HCT116 (cell line): ENCODE measurements at regions of chr21 and their contacts with region 1.

Region 1: GRCh38 chr21:31180256-31181081 is 142.2 kb upstream of the KRTAP19-8 start:
- DNase-seq: peak; percentile 24
- ATAC-seq: peak; percentile 63; the same call in 1 of the 2 replicates
- H3K4me3 ChIP-seq: no peak overlapping the region
- H3K27ac ChIP-seq: no peak overlapping the region
- H3K4me1 ChIP-seq: no peaks in the 10 kb centered on the region
- H3K27me3 ChIP-seq: no peaks in the 10 kb centered on the region
- CTCF ChIP-seq: peak; percentile 31 to 68 (median 56); a peak in 5 of 6 replicates
- POLR2A ChIP-seq: no peak
- RAD21 ChIP-seq: peak; percentile 45

Region 2: GRCh38 chr21:31098576-31099005 is 81.9 kb before region 1 on chr21:
- CTCF ChIA-PET with region 1: interaction called, 5 read pairs
- POLR2A ChIA-PET with region 1: no interaction called
- RAD21 ChIA-PET with region 1: no interaction called
- intact Hi-C with region 1: loop called (anchors 1 kb)
- DNase-seq: peak; percentile 51
- ATAC-seq: peak; percentile 97
- H3K4me3 ChIP-seq: no peak overlapping the region
- H3K27ac ChIP-seq: no peak overlapping the region
- H3K4me1 ChIP-seq: no peaks in the 10 kb centered on the region; a peak in 1 of 4 replicates
- H3K27me3 ChIP-seq: 0 out of 2 replicates have a peak, but pooled peaks cover 3% of the 10 kb centered on the region
- CTCF ChIP-seq: peak; percentile 65 to 94 (median 92)
- POLR2A ChIP-seq: no peak
- RAD21 ChIP-seq: peak; percentile 79

Region 3: GRCh38 chr21:31107871-31108270 is 72.6 kb before region 1 on chr21:
- CTCF ChIA-PET with region 1: no interaction called
- POLR2A ChIA-PET with region 1: no interaction called
- RAD21 ChIA-PET with region 1: no interaction called
- intact Hi-C with region 1: loop called (anchors 1 kb)
- DNase-seq: no peak
- ATAC-seq: no peak
- H3K4me3 ChIP-seq: no peak overlapping the region
- H3K27ac ChIP-seq: no peak overlapping the region
- H3K4me1 ChIP-seq: no peaks in the 10 kb centered on the region
- H3K27me3 ChIP-seq: no peaks in the 10 kb centered on the region
- CTCF ChIP-seq: no peak
- POLR2A ChIP-seq: no peak
- RAD21 ChIP-seq: no peak

Region 4: GRCh38 chr21:31363720-31364119 is 183.3 kb after region 1 on chr21:
- CTCF ChIA-PET with region 1: no interaction called
- POLR2A ChIA-PET with region 1: no interaction called
- RAD21 ChIA-PET with region 1: no interaction called
- intact Hi-C with region 1: no loop called
- DNase-seq: no peak
- ATAC-seq: no peak
- H3K4me3 ChIP-seq: no peak overlapping the region
- H3K27ac ChIP-seq: no peak overlapping the region
- H3K4me1 ChIP-seq: peaks cover 52 to 80% of the 10 kb centered on the region in 2 experiments
- H3K27me3 ChIP-seq: no peaks in the 10 kb centered on the region
- CTCF ChIP-seq: no peak
- POLR2A ChIP-seq: no peak
- RAD21 ChIP-seq: no peak